Naive thymus-derived CD4-positive, alpha-beta T cell (primary cell): ENCODE measurements at regions of chr10 and their contacts with region 1.

Region 1: GRCh38 chr10:100433253-100434240 is 29.3 kb upstream of the WNT8B start:
- DNase-seq: peak; percentile 84 to 96 (median 92)
- ATAC-seq: peak; percentile 100
- H3K4me3 ChIP-seq: no peak overlapping the region
- H3K4me3 Mint-ChIP-seq: no peak overlapping the region
- H3K27ac ChIP-seq: no peak overlapping the region
- H3K27ac Mint-ChIP-seq: peak overlapping the region in 1 of 9 donors; percentile 9
- H3K4me1 ChIP-seq: no peaks in the 10 kb centered on the region
- H3K4me1 Mint-ChIP-seq: peaks cover 0 to 18% (median 0%) of the 10 kb centered on the region in 7 donors
- H3K27me3 ChIP-seq: no peaks in the 10 kb centered on the region
- H3K27me3 Mint-ChIP-seq: no peaks in the 10 kb centered on the region

Region 2: GRCh38 chr10:100267237-100268104 is 166.1 kb before region 1 on chr10 and contains the start of gene CWF19L1:
- CTCF ChIA-PET with region 1: no interaction called
- POLR2A ChIA-PET with region 1: no interaction called
- intact Hi-C with region 1: loop called in 1 of 2 experiments (anchors 1 kb)
- DNase-seq: peak; percentile 39 to 74 (median 64)
- ATAC-seq: peak; percentile 91
- H3K4me3 ChIP-seq: peak within 1 kb of the TSS; percentile 93
- H3K4me3 Mint-ChIP-seq: peak within 1 kb of the TSS; percentile 89 to 100 (median 100)
- H3K27ac ChIP-seq: peak within 1 kb of the TSS; percentile 96
- H3K27ac Mint-ChIP-seq: peak within 1 kb of the TSS; percentile 95 to 100 (median 99)
- H3K4me1 ChIP-seq: peaks cover 12 to 21% of the 10 kb centered on the region in 2 donors
- H3K4me1 Mint-ChIP-seq: peaks cover 17 to 40% (median 27%) of the 10 kb centered on the region in 7 donors
- H3K27me3 ChIP-seq: no peaks in the 10 kb centered on the region
- H3K27me3 Mint-ChIP-seq: no peaks in the 10 kb centered on the region
- total RNA-seq, gene CWF19L1: 41.8 to 46.8 (median 42.6) TPM

Region 3: GRCh38 chr10:100303724-100304319 is 129.7 kb before region 1 on chr10:
- CTCF ChIA-PET with region 1: interaction called, 3 read pairs
- POLR2A ChIA-PET with region 1: no interaction called
- intact Hi-C with region 1: loop called (anchors 1 kb)
- DNase-seq: no peak
- ATAC-seq: peak; percentile 47
- H3K4me3 ChIP-seq: no peak overlapping the region
- H3K4me3 Mint-ChIP-seq: no peak overlapping the region
- H3K27ac ChIP-seq: no peak overlapping the region
- H3K27ac Mint-ChIP-seq: no peak overlapping the region
- H3K4me1 ChIP-seq: no peaks in the 10 kb centered on the region
- H3K4me1 Mint-ChIP-seq: no peaks in the 10 kb centered on the region
- H3K27me3 ChIP-seq: peaks cover 0 to 4% of the 10 kb centered on the region in 2 donors
- H3K27me3 Mint-ChIP-seq: peaks cover 13 to 65% (median 52%) of the 10 kb centered on the region in 5 donors

Region 4: GRCh38 chr10:100338434-100339036 is 95.0 kb before region 1 on chr10:
- CTCF ChIA-PET with region 1: interaction called, 30 read pairs
- POLR2A ChIA-PET with region 1: no interaction called
- intact Hi-C with region 1: loop called (anchors 1 kb)
- DNase-seq: peak; percentile 50 to 82 (median 74)
- ATAC-seq: peak; percentile 94
- H3K4me3 ChIP-seq: no peak overlapping the region
- H3K4me3 Mint-ChIP-seq: no peak overlapping the region
- H3K27ac ChIP-seq: no peak overlapping the region
- H3K27ac Mint-ChIP-seq: peak overlapping the region in 2 of 9 donors; percentile 69 to 82
- H3K4me1 ChIP-seq: no peaks in the 10 kb centered on the region
- H3K4me1 Mint-ChIP-seq: peaks cover 0 to 35% (median 0%) of the 10 kb centered on the region in 7 donors
- H3K27me3 ChIP-seq: no peaks in the 10 kb centered on the region
- H3K27me3 Mint-ChIP-seq: peaks cover 0 to 15% (median 0%) of the 10 kb centered on the region in 5 donors

Region 5: GRCh38 chr10:100481462-100482081 is 48.0 kb after region 1 on chr10:
- CTCF ChIA-PET with region 1: no interaction called
- POLR2A ChIA-PET with region 1: no interaction called
- intact Hi-C with region 1: loop called in 1 of 2 experiments (anchors 1 kb)
- DNase-seq: peak; percentile 86 to 97 (median 90)
- ATAC-seq: peak; percentile 98
- H3K4me3 ChIP-seq: peak overlapping the region; percentile 70
- H3K4me3 Mint-ChIP-seq: peak overlapping the region; percentile 63 to 92 (median 86)
- H3K27ac ChIP-seq: no peak overlapping the region
- H3K27ac Mint-ChIP-seq: peak overlapping the region in 5 of 9 donors; percentile 1 to 76 (median 66)
- H3K4me1 ChIP-seq: peaks cover 0 to 4% of the 10 kb centered on the region in 2 donors
- H3K4me1 Mint-ChIP-seq: peaks cover 10 to 35% (median 12%) of the 10 kb centered on the region in 7 donors
- H3K27me3 ChIP-seq: no peaks in the 10 kb centered on the region
- H3K27me3 Mint-ChIP-seq: peaks cover 4 to 31% (median 26%) of the 10 kb centered on the region in 5 donors

Region 6: DNA sequence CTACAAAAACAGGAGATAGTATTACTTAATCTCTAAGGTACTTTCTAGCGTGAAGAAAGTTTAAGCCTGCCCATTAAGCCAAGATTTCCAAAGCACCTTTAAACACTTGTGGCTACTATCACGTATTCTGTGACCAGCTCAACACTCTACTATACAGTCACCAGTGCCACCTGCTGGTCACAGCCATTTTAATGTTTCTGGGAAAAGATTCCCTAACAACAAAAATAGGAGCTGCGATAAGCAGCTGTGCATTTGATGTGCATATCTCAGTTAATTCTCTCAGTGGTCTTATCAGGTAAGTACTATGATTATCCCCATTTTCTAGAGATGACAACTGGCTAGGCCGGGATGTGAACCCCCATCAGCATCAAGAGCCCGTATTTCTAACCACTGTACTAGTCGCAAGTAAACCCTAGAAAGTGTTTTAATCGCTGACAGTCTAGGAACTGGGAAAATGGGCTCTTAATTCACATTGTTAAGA is 85.3 kb after region 1 on chr10:
- CTCF ChIA-PET with region 1: interaction called, 45 read pairs
- POLR2A ChIA-PET with region 1: no interaction called
- intact Hi-C with region 1: loop called (anchors 1 kb)
- DNase-seq: peak in 7 of 9 donors; percentile 48 to 65 (median 58)
- ATAC-seq: peak; percentile 83
- H3K4me3 ChIP-seq: no peak overlapping the region
- H3K4me3 Mint-ChIP-seq: peak overlapping the region in 1 of 10 donors; percentile 30
- H3K27ac ChIP-seq: no peak overlapping the region
- H3K27ac Mint-ChIP-seq: peak overlapping the region in 5 of 9 donors; percentile 62 to 83 (median 72)
- H3K4me1 ChIP-seq: peaks cover 0 to 10% of the 10 kb centered on the region in 2 donors
- H3K4me1 Mint-ChIP-seq: peaks cover 4 to 49% (median 16%) of the 10 kb centered on the region in 7 donors
- H3K27me3 ChIP-seq: no peaks in the 10 kb centered on the region
- H3K27me3 Mint-ChIP-seq: no peaks in the 10 kb centered on the region

Region 7: GRCh38 chr10:100872034-100872791 is 438.7 kb after region 1 on chr10:
- CTCF ChIA-PET with region 1: no interaction called
- POLR2A ChIA-PET with region 1: no interaction called
- intact Hi-C with region 1: no loop called
- DNase-seq: peak in 7 of 9 donors; percentile 18 to 64 (median 27)
- ATAC-seq: peak; percentile 44
- H3K4me3 ChIP-seq: no peak overlapping the region
- H3K4me3 Mint-ChIP-seq: no peak overlapping the region
- H3K27ac ChIP-seq: no peak overlapping the region
- H3K27ac Mint-ChIP-seq: no peak overlapping the region
- H3K4me1 ChIP-seq: no peaks in the 10 kb centered on the region
- H3K4me1 Mint-ChIP-seq: peaks cover 0 to 5% (median 0%) of the 10 kb centered on the region in 7 donors
- H3K27me3 ChIP-seq: no peaks in the 10 kb centered on the region
- H3K27me3 Mint-ChIP-seq: peaks cover 2 to 19% (median 16%) of the 10 kb centered on the region in 5 donors